MCF 10A (cell line): ENCODE measurements at regions of chr10 and their contacts with region 1.

Region 1: DNA sequence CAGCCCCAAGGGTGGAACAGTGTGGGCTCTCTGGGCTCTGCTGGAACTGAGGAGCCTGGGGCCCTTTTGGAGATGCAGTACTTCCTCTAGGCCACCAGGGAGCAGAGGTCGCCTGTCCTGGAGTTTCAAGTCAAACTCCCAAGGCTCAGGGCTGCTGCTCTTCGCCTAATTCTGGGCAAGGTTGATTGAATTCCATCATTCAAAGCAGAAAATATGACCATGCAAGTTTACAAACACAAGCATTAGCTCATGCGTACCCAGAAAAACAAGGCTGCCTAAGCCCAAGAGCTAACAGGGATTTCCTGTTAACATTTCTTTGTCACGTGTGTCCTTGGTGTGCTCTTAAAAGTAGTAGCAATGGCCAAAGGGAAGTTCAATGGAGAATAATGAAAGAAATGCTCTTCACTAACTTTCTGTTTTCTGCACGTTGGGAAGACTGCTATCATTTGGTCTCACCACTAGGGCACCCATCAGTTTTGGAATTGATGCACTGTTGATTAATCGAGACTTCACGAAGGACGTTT is 20.1 kb downstream of the LDB3 start:
- DNase-seq: peak; percentile 67
- H3K4me3 Mint-ChIP-seq: no peak overlapping the region
- H3K27ac Mint-ChIP-seq: no peak overlapping the region
- H3K4me1 Mint-ChIP-seq: no peaks in the 10 kb centered on the region
- H3K27me3 Mint-ChIP-seq: peaks cover 15% of the 10 kb centered on the region
- CTCF ChIP-seq: peak; percentile 76

Region 2: GRCh38 chr10:86965986-86966654 is 277.7 kb after region 1 on chr10:
- CTCF ChIA-PET with region 1: no interaction called
- POLR2A ChIA-PET with region 1: no interaction called
- intact Hi-C with region 1: loop called (anchors 1 kb)
- DNase-seq: no peak
- H3K4me3 Mint-ChIP-seq: no peak overlapping the region
- H3K27ac Mint-ChIP-seq: no peak overlapping the region
- H3K4me1 Mint-ChIP-seq: peaks cover 36% of the 10 kb centered on the region
- H3K27me3 Mint-ChIP-seq: no peaks in the 10 kb centered on the region
- CTCF ChIP-seq: no peak